ENCODE measurements at regions of chr10 and their contacts with region 1.

Region 1: GRCh38 chr10:100878291-100878910 is 34.4 kb upstream of the SLF2 start:
- DNase-seq: peak; percentile 77 to 80
- H3K4me3 ChIP-seq: no peak overlapping the region
- H3K4me3 Mint-ChIP-seq: no peak overlapping the region
- H3K27ac Mint-ChIP-seq: peak overlapping the region; percentile 20
- H3K4me1 ChIP-seq: peaks cover 61% of the 10 kb centered on the region
- H3K4me1 Mint-ChIP-seq: peaks cover 60% of the 10 kb centered on the region
- H3K27me3 ChIP-seq: no peaks in the 10 kb centered on the region
- H3K27me3 Mint-ChIP-seq: no peaks in the 10 kb centered on the region
- CTCF ChIP-seq: peak; percentile 66 to 90

Region 2: DNA sequence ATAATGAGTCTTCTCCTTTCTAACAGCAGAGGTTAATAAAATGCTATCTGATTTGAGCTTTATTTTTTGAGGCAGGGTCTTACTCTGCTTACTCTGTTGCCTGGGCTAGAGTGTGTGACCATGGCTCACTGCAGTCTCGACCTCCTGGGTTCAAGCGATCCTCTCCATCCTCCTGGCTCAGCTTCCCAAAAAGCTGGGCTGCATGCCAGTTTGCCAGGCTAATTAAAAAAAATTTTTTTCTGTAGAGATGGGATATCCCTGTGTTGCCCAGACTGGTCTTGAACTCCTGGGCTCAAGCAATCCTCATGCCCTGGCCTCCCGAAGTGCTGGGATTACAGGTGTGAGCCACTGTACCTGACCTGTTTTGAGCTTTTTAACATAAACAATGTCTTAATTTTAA is 474.7 kb before region 1 on chr10:
- CTCF ChIA-PET with region 1: no interaction called
- POLR2A ChIA-PET with region 1: no interaction called
- intact Hi-C with region 1: no loop called
- DNase-seq: no peak
- H3K4me3 ChIP-seq: no peak overlapping the region
- H3K4me3 Mint-ChIP-seq: no peak overlapping the region
- H3K27ac Mint-ChIP-seq: no peak overlapping the region
- H3K4me1 ChIP-seq: no peaks in the 10 kb centered on the region
- H3K4me1 Mint-ChIP-seq: no peaks in the 10 kb centered on the region
- H3K27me3 ChIP-seq: no peaks in the 10 kb centered on the region
- H3K27me3 Mint-ChIP-seq: no peaks in the 10 kb centered on the region
- CTCF ChIP-seq: no peak

Region 3: GRCh38 chr10:100518761-100519241 is 359.6 kb before region 1 on chr10:
- CTCF ChIA-PET with region 1: interaction called, 13 read pairs
- POLR2A ChIA-PET with region 1: no interaction called
- intact Hi-C with region 1: no loop called
- DNase-seq: peak; percentile 52 to 66
- H3K4me3 ChIP-seq: no peak overlapping the region
- H3K4me3 Mint-ChIP-seq: no peak overlapping the region
- H3K27ac Mint-ChIP-seq: no peak overlapping the region
- H3K4me1 ChIP-seq: no peaks in the 10 kb centered on the region
- H3K4me1 Mint-ChIP-seq: no peaks in the 10 kb centered on the region
- H3K27me3 ChIP-seq: no peaks in the 10 kb centered on the region
- H3K27me3 Mint-ChIP-seq: no peaks in the 10 kb centered on the region
- CTCF ChIP-seq: peak; percentile 58 to 70

Region 4: DNA sequence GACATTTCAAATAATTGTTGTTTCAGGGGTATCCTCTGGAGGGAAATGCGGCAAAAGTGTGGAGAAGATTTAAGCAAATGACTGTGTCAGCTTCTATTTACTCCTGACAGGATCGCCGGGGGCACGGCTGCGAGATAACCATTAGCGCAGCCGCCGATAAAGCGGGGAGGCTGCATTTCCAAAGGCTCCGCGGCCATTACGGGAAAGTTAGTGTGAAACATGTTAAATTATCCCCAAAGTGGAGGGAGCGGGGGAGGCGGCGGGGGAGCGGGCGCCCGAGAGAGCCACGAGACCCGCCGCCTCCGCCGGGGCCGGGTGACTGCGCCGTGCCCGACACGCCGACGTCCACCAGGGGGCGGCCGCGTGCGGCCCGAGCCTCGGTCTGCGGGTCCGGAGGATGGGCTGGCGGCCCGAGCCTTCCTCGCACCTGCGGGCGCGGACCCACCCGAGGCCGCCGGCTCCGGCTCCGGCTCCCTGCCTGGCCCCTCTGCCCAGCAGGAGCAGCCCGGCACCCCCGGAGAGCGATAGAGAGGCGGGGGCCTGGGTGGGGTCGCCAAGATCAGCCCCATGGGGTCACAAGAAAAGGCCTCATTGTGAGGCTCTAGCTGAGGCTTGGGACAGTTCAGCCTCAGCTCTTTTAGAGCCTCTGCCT is 207.4 kb before region 1 on chr10:
- CTCF ChIA-PET with region 1: interaction called, 6 read pairs
- POLR2A ChIA-PET with region 1: no interaction called
- intact Hi-C with region 1: loop called (anchors 1 kb)
- DNase-seq: peak in 1 of 2 experiments; percentile 77
- H3K4me3 ChIP-seq: peak overlapping the region; percentile 24
- H3K4me3 Mint-ChIP-seq: peak overlapping the region; percentile 54
- H3K27ac Mint-ChIP-seq: no peak overlapping the region
- H3K4me1 ChIP-seq: 0 out of 2 replicates have a peak, but pooled peaks cover 8% of the 10 kb centered on the region
- H3K4me1 Mint-ChIP-seq: no peaks in the 10 kb centered on the region
- H3K27me3 ChIP-seq: no peaks in the 10 kb centered on the region; the same call in 1 of the 2 replicates
- H3K27me3 Mint-ChIP-seq: peaks cover 29% of the 10 kb centered on the region
- CTCF ChIP-seq: peak; percentile 51 to 94

Region 5: GRCh38 chr10:100766693-100767421 is 111.5 kb before region 1 on chr10:
- CTCF ChIA-PET with region 1: interaction called, 20 read pairs
- POLR2A ChIA-PET with region 1: no interaction called
- intact Hi-C with region 1: loop called (anchors 1 kb)
- DNase-seq: peak in 1 of 2 experiments; percentile 53
- H3K4me3 ChIP-seq: no peak overlapping the region
- H3K4me3 Mint-ChIP-seq: no peak overlapping the region
- H3K27ac Mint-ChIP-seq: no peak overlapping the region
- H3K4me1 ChIP-seq: no peaks in the 10 kb centered on the region
- H3K4me1 Mint-ChIP-seq: no peaks in the 10 kb centered on the region
- H3K27me3 ChIP-seq: no peaks in the 10 kb centered on the region
- H3K27me3 Mint-ChIP-seq: peaks cover 23% of the 10 kb centered on the region
- CTCF ChIP-seq: peak; percentile 8 to 71

Region 6: GRCh38 chr10:100912605-100913469 is 34.4 kb after region 1 on chr10 and contains the start of gene SLF2:
- CTCF ChIA-PET with region 1: interaction called, 8 read pairs
- POLR2A ChIA-PET with region 1: no interaction called
- intact Hi-C with region 1: loop called (anchors 2 kb)
- DNase-seq: peak; percentile 98
- H3K4me3 ChIP-seq: peak within 1 kb of the TSS; percentile 100
- H3K4me3 Mint-ChIP-seq: peak within 1 kb of the TSS; percentile 98
- H3K27ac Mint-ChIP-seq: peak within 1 kb of the TSS; percentile 91
- H3K4me1 ChIP-seq: 0 out of 2 replicates have a peak, but pooled peaks cover 4% of the 10 kb centered on the region
- H3K4me1 Mint-ChIP-seq: peaks cover 14% of the 10 kb centered on the region
- H3K27me3 ChIP-seq: no peaks in the 10 kb centered on the region
- H3K27me3 Mint-ChIP-seq: no peaks in the 10 kb centered on the region
- CTCF ChIP-seq: no peak
- total RNA-seq, gene SLF2: 25.2 and 28.8 TPM in 2 replicates

Region 7: DNA sequence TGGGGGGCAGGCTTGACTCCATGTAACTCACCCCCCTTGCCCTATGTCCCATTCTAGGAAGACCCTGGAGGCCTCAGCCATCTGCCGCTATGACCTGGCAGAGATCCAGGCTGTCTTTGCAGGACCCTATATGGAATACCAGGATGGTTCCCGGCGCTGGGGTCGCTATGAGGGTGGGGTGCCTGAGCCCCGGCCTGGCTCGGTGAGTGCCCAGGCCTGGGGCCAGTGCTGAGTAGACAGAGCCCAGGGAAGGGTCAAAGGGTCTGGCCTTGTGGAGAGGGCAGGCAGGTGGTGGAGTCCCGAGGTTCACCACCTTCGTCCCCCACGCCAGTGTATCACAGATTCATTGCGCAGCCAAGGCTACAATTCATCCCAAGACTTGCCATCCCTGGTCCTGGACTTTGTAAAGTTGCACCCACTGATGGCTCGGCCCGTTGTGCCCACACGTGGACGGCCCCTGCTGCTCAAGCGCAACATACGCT is 101.4 kb after region 1 on chr10:
- CTCF ChIA-PET with region 1: no interaction called
- POLR2A ChIA-PET with region 1: no interaction called
- intact Hi-C with region 1: no loop called
- DNase-seq: peak in 1 of 2 experiments; percentile 21
- H3K4me3 ChIP-seq: no peak overlapping the region
- H3K4me3 Mint-ChIP-seq: no peak overlapping the region
- H3K27ac Mint-ChIP-seq: no peak overlapping the region
- H3K4me1 ChIP-seq: peaks cover 7% of the 10 kb centered on the region
- H3K4me1 Mint-ChIP-seq: peaks cover 14% of the 10 kb centered on the region
- H3K27me3 ChIP-seq: no peaks in the 10 kb centered on the region
- H3K27me3 Mint-ChIP-seq: no peaks in the 10 kb centered on the region
- CTCF ChIP-seq: no peak